ENCODE measurements at regions of chr5 and their contacts with region 1.

Region 1: GRCh38 chr5:127290019-127290945 is at the start of gene MEGF10:
- DNase-seq: peak; percentile 73
- H3K4me3 ChIP-seq: peak within 1 kb of the TSS; percentile 58
- H3K27ac ChIP-seq: no peak within 1 kb of the TSS
- H3K4me1 ChIP-seq: 0 out of 2 replicates have a peak, but pooled peaks cover 5% of the 10 kb centered on the region
- H3K27me3 ChIP-seq: peaks cover 71% of the 10 kb centered on the region
- total RNA-seq, gene MEGF10: not detected in 2 replicates

Region 2: GRCh38 chr5:126837906-126838539 is 452.3 kb before region 1 on chr5:
- in situ Hi-C with region 1: loop called (anchors 25 kb)
- DNase-seq: peak; percentile 50
- H3K4me3 ChIP-seq: no peak overlapping the region
- H3K27ac ChIP-seq: no peak overlapping the region
- H3K4me1 ChIP-seq: no peaks in the 10 kb centered on the region
- H3K27me3 ChIP-seq: no peaks in the 10 kb centered on the region

Region 3: GRCh38 chr5:127441799-127442484 is 151.7 kb after region 1 on chr5:
- in situ Hi-C with region 1: loop called (anchors 10 kb)
- DNase-seq: peak; percentile 65
- H3K4me3 ChIP-seq: no peak overlapping the region
- H3K27ac ChIP-seq: no peak overlapping the region
- H3K4me1 ChIP-seq: peaks cover 9% of the 10 kb centered on the region
- H3K27me3 ChIP-seq: peaks cover 17% of the 10 kb centered on the region